Pancreas (tissue), 10 donors: ENCODE measurements at regions of chr20 and their contacts with region 1.

Region 1: DNA sequence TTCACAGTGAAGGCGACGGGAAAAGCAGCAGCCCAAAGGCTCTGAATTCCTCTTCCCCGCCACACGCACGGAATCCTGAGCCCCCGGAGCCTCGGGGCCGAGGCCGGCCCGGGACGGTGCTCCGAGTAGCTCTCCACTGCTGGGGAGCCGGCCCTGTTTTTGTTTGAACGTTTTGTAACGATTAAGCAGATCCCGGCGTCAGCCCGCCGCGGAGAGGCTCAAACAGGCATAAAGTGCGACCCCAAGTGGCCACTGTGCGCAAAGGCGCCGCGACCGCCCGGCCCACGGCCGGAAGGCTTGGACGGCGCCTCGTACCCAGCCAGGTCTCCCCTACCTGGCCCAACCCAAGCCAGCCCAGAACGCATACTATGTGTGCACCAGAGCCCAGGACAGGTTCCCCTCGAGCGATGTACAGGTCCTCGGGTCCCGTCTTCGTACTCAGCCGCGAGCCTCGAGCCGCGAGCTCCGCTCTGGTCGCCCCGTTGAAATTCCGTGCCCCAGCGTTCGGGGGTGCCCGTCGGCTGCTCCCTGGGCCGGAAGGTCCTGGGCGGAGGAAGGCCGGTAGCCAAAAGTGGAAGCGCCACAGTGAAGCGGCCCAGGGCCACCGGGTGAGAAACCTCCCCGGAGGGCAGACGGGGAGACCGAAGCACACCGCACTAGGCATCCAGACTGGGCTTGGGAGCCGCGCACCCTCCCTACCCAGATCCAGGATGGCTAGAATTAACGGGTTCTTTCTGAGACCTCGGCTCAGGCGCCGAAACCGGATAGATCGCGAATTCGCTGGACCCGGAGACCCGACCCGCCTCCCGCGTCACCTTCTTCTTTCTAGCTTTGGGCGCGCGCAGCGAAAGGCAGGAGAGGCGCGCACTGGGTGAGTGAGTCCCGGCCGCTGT is 1.2 kb upstream of the MAFB start:
- DNase-seq: peak; percentile 86 to 98 (median 92)
- ATAC-seq: peak; percentile 60 to 81 (median 69)
- H3K4me3 ChIP-seq: peak overlapping the region; percentile 47 to 75 (median 62)
- H3K27ac ChIP-seq: peak overlapping the region; percentile 89 to 98 (median 93)
- H3K4me1 ChIP-seq: peaks cover 0 to 4% (median 0%) of the 10 kb centered on the region in 3 donors
- H3K27me3 ChIP-seq: peaks cover 0 to 19% (median 4%) of the 10 kb centered on the region in 4 donors
- CTCF ChIP-seq: peak; percentile 93 to 96 (median 94)

Region 2: DNA sequence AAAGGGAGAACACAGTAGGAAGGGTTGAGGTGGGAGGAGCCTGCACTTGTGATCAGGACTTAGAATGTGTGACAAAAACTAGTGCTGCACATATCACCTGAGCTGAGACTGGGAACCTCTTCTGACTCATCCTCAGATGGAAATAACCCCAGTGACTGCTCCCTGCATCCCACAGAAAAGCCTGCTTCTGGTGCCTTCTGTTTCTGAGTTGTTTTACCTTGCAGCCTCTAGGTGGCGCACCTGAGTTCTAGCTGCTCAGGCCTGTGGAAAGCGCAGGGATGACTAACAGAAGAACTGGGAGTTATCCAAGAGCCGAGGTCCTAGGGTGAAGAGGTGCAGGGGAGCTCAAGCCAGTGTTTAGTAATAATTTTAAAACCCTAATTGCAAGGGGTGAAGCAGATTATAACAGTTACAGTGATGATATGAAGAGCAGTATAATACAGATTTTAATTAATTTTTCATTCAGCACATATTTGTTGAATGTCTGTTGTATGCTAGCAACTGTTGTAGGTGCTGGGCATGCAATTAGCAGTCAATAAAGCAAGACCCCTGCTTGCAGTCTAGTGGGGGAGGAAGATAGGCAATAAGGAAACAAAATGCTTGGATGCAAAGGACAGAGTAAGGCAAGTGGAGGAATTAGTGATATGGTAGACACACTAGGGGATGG is 1425.5 kb before region 1 on chr20:
- intact Hi-C with region 1: loop called in 1 of 3 experiments (anchors 10 kb)
- DNase-seq: peak in 5 of 6 donors; percentile 27 to 77 (median 58)
- ATAC-seq: peak; percentile 38 to 87 (median 84)
- H3K4me3 ChIP-seq: no peak overlapping the region
- H3K27ac ChIP-seq: no peak overlapping the region
- H3K4me1 ChIP-seq: no peaks in the 10 kb centered on the region
- H3K27me3 ChIP-seq: no peaks in the 10 kb centered on the region
- CTCF ChIP-seq: peak; percentile 71 to 81 (median 79)

Region 3: GRCh38 chr20:40056166-40056565 is 634.0 kb before region 1 on chr20:
- intact Hi-C with region 1: no loop called
- DNase-seq: no peak
- ATAC-seq: no peak
- H3K4me3 ChIP-seq: no peak overlapping the region
- H3K27ac ChIP-seq: no peak overlapping the region
- H3K4me1 ChIP-seq: no peaks in the 10 kb centered on the region
- H3K27me3 ChIP-seq: no peaks in the 10 kb centered on the region
- CTCF ChIP-seq: no peak

Region 4: DNA sequence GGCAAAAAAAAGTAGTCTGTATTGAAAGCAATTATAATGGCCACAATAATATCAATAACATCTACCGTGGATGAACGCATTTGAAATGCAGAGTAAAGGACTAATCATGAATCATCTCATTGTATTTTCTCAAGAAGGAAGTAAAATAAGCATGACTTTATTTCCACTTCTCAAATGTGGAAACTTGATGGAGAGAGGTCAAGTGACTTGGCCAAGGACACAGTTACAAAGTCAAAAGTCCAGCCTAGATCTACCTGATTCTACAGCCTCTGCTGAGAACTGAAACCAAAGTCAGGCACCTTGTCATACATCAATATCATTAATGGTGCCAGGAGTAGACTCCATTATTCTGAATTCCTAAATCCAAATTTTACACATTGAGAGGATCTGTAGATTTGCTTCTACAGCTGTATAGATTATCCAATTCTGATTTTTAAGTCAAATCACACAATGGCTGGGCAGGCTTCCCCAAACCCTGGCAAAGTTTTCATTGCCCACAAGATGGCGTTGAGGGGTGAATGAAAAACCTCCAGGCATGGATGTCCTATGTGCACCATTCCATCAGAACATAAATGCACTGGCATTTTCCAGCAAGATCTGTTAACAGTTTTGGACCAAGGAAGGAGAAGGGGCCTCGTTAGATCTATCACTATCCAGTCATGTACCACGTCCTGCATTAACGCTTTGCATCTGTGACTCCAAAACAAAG is 424.2 kb before region 1 on chr20:
- intact Hi-C with region 1: loop called in 1 of 3 experiments (anchors 10 kb)
- DNase-seq: peak in 1 of 6 donors; percentile 36
- ATAC-seq: peak in 3 of 4 donors; percentile 73 to 85 (median 76)
- H3K4me3 ChIP-seq: no peak overlapping the region
- H3K27ac ChIP-seq: no peak overlapping the region
- H3K4me1 ChIP-seq: no peaks in the 10 kb centered on the region
- H3K27me3 ChIP-seq: no peaks in the 10 kb centered on the region
- CTCF ChIP-seq: peak in 2 of 4 donors; percentile 15 to 30